Left cardiac atrium (tissue), 4 donors: ENCODE measurements at regions of chr15 and their contacts with region 1.

Region 1: DNA sequence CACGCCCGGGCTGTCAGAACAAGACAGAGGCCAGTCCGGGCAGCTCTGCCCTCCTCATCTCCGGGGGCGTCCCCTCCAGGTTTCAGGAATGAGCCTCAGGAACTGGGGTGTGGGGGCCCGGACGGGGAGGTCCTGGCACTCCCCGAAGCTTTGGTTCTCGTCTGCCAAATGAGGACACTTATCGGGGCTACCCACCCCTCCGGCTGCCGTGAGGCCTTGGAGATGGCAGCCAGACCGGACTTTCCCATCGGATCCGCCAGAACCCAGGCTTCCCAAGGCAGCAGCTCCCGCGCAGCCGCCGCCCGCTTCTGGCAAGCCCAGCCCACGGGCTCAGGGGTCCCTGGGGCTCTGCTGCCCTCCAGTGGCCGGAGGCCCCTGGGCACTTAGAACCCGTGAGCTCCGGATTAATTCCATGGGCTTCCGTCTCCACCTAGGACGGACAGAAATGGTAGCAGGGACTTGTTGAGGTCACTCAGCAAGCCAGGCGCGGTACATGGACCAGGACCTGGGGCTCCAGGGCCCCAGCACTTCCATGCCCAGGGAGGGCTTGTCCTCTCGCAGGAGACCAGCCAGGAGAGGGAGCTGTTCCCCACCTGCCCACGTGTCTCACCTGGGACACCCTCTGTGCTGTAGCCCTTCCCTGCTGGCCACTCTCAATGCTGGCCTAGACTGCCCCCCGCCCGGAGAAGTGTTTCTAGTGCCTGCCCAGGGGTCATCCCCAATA is 89.4 kb downstream of the LINGO1 start:
- DNase-seq: peak; percentile 93
- ATAC-seq: peak; percentile 87 to 94

Region 2: DNA sequence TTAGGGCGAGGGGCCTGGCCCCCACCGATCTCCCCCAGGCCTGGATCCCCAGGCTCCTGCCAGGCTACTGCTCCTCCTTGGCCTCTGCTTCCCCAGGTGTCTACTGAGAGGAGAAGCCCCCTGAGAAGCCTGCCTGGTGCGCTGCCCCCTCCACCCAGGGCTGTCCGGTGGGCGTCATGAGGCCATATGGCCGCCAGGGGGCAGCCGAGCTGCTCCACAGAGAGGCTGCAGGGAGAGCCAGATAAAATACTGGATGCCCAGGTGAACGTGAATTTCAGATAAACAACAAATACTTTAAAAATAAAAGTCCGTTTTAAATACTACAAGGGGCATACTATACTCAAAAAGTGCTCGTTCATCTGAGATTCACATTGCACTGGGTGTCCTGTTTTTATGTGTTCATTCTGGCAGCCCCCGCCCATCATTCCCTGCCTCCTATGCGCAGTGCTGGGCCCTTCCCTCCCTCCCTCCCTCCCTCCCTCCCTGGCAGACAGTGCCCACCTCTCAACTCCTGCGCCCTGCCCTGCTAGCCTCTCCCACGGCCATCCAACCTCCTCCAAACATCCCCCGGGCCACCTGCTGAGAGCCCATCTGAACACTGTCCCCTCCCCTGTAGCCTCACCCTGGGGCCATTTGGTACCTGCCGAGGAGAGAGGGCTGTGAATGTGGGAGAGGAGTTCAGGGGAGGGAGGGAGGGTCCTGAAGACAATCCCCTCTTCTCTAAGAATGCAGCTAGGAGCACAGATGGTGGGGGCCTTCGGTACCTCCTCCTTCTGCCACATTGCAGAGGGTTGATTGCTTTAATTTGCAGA is 518.8 kb before region 1 on chr15:
- intact Hi-C with region 1: loop called in 1 of 2 experiments (anchors 10 kb)
- DNase-seq: peak; percentile 69
- ATAC-seq: peak; percentile 47 to 64

Region 3: DNA sequence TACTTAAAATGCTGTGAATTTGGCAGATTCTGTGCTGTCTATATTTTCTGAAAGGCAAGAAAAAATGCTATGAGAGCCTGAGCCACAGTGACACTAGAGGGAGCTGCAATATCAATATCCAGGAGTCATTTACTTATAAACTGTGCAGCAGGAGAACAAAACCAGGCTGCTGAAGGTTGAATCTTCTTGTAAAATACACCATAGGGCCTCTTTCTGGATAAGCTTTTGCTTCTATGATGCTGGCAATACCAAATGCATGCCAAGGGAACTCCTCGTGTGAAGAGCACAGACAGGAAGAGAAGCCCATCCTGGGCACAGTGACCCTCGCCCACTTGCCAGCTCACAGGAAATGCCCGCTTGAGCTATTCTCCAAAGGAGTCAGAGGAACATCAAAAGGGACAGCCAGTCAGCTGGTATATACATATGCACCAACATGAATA is 424.4 kb before region 1 on chr15:
- intact Hi-C with region 1: loop called (anchors 1 to 10 kb)
- DNase-seq: no peak
- ATAC-seq: peak; percentile 68 to 79

Region 4: GRCh38 chr15:77186594-77187011 is 356.7 kb before region 1 on chr15:
- intact Hi-C with region 1: loop called in 1 of 2 experiments (anchors 2 kb)
- DNase-seq: no peak
- ATAC-seq: peak; percentile 33 to 45

Region 5: DNA sequence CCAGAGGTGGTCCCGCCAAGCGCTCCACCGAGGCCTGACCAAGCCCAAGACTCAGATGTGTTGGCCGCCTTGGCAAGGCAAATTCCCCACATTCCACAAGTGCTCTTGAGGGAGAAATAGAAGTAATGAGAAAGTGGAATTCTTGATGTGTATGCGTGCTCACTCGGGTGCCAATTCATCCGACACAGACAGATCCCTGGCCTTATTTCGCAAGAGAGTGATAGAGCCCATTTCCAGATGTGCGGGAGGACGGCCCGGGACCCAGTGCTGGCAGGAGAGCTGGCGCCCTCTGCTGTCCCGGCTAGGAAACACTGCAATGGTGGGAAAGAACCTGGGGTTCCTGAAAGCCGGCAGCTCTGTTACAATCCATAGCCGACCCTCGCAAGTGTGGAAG is 46.6 kb before region 1 on chr15:
- intact Hi-C with region 1: loop called in 1 of 2 experiments (anchors 5 kb)
- DNase-seq: peak; percentile 90
- ATAC-seq: peak; percentile 86 to 89

Region 6: DNA sequence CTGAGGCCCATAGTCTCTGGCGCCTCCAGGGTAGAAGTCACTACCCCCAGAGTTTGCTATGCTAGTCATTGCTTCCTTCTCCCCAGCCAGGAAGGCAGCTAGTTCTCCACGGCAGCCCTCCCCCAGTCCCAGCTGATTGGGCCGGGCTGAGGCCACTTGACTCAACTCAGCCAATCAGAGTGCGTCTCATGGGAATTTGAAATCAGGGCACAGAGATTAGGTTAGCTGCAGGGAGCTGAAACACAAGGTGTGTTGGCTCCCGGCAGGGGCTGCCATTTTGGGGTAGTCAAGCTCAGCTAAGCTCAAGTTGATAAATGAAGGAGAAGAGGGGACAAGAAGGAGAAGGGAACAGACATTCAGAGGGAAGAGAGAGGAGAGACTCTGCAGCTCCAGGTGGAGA is 56.6 kb after region 1 on chr15:
- intact Hi-C with region 1: no loop called
- DNase-seq: peak; percentile 73
- ATAC-seq: peak; percentile 89 to 93

Region 7: DNA sequence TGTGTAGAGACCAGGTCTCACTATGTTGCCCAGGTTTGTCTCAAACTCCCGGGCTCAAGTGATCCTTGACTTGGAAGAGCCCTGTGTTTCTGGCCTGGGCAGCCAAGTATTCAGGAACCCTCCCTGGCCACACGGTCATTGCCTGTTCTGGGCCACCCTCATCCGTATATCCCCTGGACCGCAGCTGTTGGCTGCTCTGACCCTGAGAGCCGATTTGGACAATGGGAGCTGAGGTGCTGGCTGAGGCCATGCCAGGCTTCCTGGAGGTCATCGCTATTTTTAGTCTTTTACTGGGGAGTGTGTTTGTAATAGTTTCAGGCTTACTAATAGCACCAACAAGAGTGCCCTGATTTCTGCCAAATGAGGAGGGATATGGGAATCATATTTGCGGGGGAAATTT is 1207.2 kb after region 1 on chr15:
- intact Hi-C with region 1: no loop called
- DNase-seq: no peak
- ATAC-seq: peak; percentile 17 to 62